ENCODE measurements at regions of chr5 and their contacts with region 1.

Region 1: DNA sequence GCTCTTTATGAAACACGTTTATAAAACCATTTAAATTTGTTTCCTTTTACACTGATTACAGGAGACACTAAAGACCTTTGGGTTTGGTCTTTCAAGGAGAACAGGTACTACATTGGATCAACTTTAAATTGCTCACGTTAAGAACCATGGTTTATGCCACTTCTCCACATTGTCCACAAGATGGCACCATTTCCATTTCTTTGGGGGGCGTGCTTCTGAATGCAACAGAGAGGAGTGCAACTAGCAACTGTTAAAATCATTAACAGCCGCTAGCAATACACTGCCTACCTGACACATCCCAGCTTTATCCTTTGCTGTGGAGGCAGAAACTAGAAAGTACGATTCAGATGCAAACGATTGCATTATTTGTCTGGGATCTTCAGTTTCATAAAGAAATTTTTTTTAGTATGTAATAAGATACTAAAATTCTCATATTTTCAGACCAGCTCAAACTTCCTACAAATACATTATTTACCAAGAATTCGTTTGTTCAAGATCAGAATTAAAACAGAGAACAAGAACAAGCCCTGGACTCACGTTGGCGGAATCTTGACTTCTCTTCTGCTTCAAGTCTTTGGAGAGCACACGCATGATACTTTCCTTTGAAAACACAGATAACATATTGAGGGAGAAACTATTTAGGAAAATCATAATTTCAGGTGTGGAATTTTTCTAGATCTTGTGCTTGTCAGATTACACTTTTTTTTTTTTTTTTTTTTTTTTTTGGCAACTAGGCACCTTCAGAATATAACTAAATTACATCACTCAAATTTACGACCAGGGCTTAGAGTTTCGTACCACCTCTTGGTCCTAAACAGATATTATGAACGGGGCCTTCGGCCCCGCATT is 702 bp downstream of the CDC20B start:
- DNase-seq: peak in 1 of 2 donors; percentile 78
- H3K4me3 ChIP-seq: peak overlapping the region; percentile 57 to 64
- H3K27ac ChIP-seq: no peak overlapping the region
- H3K4me1 ChIP-seq: peaks cover 0 to 8% of the 10 kb centered on the region in 2 donors
- H3K27me3 ChIP-seq: peaks cover 6% of the 10 kb centered on the region
- CTCF ChIP-seq: peak; percentile 47 to 80 (median 65)

Region 2: DNA sequence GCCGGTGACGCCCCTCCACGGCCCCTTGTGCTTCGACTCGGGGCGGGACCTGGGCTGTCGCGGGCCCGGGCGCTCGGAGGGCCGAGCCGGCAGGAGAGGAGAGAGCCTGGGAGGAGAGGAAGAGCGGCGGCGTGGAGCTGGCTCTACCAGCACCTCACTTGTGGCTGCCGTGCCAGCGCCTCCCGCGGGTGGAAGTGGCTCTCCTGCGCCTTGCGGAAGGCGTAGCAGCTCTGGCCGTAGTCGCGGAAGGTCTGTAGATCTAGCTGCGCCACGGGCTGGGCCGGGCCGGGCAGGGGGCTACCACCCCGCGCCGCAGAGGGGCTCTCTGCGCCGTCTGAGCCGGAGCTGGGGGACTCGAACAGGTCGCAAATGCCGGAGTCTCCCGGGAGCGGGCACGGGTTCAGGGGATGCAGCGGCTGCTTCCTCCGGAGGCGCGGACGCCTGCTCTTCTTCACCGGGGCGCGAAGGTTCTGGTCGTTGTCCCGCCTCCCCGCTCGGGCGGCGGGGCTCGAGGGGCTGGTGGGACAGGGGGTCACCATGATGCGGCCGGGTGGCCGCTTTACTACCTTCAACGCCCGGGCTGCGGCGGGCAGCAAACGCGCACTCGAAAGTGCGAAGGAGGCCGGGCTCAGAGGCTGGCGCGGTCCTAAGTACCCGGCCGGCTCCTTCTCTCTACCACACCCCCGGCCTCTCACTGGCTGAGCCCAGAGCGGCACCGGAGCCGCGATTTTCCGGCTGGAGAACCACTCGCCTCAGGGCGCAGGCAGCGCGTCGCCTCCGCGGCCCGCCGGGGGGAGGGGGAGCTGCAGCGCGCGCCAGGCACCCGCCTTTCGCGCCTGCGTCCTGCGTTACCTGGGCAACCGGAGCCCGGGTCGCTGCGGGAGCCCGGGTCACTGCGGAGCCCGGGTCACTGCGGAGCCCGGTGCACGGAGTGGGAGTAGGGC is 61.0 kb after region 1 on chr5 and contains the start of gene CCNO:
- intact Hi-C with region 1: loop called (anchors 2 kb)
- DNase-seq: peak in 1 of 2 donors; percentile 85
- H3K4me3 ChIP-seq: peak within 1 kb of the TSS; percentile 73 to 82
- H3K27ac ChIP-seq: peak within 1 kb of the TSS; percentile 44 to 63
- H3K4me1 ChIP-seq: peaks cover 2 to 18% of the 10 kb centered on the region in 2 donors
- H3K27me3 ChIP-seq: peaks cover 9% of the 10 kb centered on the region
- CTCF ChIP-seq: no peak
- total RNA-seq, gene CCNO: 43.2 TPM